Activated CD8-positive, alpha-beta T cell treated with anti-CD3 and anti-CD28 coated beads for 36 hours (primary cell): ENCODE measurements at regions of chr9 and their contacts with region 1.

Region 1: DNA sequence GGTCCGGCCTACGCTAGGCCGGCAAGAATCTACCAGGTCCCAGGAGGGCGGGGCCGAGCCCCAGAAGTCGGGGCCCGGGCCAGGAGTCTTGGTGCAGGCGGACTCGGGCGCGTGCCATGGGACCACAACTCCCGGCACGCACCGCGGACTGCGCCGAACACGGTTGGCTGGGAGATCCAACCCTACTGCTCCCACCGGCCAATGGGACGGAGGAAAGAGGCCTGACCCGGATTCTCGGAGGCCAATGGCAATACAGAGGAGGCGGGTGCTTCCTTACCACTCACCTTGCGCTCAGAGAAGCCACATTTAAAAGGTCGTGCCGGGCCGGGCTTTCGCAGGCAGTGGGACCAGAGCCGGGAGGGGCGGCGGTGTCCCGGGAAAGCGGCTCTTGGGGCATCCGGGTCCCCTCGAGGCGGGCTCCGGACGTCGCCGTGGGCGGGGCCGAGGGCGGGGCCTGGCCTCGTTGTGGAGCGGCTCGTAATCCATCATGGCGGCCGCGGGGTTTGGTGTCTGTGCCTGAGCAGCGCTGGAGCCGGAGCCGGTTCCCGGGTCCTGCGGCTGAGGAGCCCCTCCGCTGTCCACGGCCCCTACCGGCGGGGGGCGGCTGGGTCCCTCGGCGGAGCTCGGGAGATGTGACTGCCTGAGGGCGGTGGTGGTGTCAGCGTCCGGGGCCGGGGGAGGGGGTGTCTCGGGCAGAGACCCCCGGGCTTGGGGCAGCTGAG is 19.1 kb downstream of the EXOSC2 start:
- DNase-seq: peak; percentile 98
- ATAC-seq: peak; percentile 98
- H3K4me3 Mint-ChIP-seq: peak overlapping the region; percentile 93
- H3K27ac Mint-ChIP-seq: peak overlapping the region; percentile 92
- H3K4me1 Mint-ChIP-seq: peaks cover 30% of the 10 kb centered on the region
- H3K27me3 Mint-ChIP-seq: no peaks in the 10 kb centered on the region
- CTCF ChIP-seq: no peak

Region 2: DNA sequence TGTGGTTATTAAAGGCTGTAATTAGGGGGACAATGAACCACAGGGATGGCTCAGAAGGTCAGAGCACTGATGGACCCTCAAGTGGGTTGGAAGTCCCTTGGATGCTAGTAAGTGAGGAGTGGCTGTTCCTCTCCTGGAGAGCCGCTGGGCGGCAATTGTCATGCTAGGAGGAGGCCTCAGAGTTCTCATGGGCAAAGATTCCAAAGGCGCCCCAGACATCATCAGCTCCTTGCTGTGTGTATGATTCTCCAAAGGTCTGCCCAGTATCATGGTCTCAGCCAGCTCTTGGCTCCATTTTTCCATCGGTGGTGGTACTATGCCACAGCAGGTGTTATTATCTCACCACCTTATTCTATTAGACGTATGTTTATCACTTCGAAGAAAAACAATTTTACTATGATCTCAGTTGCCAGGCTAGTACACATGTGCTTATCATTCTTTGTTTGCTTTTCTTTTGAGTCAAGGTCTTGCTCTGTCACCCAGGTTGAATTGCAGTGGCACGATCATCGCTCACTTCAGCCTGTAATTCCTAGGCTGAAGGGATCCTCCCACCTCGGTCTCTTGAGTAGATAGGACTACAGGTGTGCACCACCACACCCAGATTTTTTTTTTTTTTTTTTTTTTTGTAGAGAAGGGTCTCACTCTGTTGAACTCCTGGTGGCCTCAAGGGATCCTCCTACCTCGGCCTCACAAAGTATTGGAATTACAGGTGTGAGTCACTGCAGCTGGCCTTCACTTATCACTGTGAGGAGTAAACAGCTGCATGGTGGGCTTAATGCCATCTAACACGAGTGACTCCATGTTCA is 27.7 kb after region 1 on chr9:
- CTCF ChIA-PET with region 1: no interaction called
- POLR2A ChIA-PET with region 1: no interaction called
- intact Hi-C with region 1: no loop called
- DNase-seq: no peak
- ATAC-seq: no peak
- H3K4me3 Mint-ChIP-seq: no peak overlapping the region
- H3K27ac Mint-ChIP-seq: no peak overlapping the region
- H3K4me1 Mint-ChIP-seq: peaks cover 17% of the 10 kb centered on the region
- H3K27me3 Mint-ChIP-seq: no peaks in the 10 kb centered on the region
- CTCF ChIP-seq: no peak

Region 3: GRCh38 chr9:130834371-130835311 is 121.9 kb after region 1 on chr9 and contains the start of gene ABL1:
- CTCF ChIA-PET with region 1: interaction called, 4 read pairs
- POLR2A ChIA-PET with region 1: interaction called, 3 read pairs
- intact Hi-C with region 1: loop called (anchors 10 kb)
- DNase-seq: peak; percentile 90
- ATAC-seq: peak; percentile 84
- H3K4me3 Mint-ChIP-seq: peak within 1 kb of the TSS; percentile 88
- H3K27ac Mint-ChIP-seq: peak within 1 kb of the TSS; percentile 96
- H3K4me1 Mint-ChIP-seq: peaks cover 38% of the 10 kb centered on the region
- H3K27me3 Mint-ChIP-seq: no peaks in the 10 kb centered on the region
- CTCF ChIP-seq: no peak
- total RNA-seq, gene ABL1: 30.2 to 33.0 TPM